ENCODE measurements at regions of chr15 and their contacts with region 1.

Region 1: DNA sequence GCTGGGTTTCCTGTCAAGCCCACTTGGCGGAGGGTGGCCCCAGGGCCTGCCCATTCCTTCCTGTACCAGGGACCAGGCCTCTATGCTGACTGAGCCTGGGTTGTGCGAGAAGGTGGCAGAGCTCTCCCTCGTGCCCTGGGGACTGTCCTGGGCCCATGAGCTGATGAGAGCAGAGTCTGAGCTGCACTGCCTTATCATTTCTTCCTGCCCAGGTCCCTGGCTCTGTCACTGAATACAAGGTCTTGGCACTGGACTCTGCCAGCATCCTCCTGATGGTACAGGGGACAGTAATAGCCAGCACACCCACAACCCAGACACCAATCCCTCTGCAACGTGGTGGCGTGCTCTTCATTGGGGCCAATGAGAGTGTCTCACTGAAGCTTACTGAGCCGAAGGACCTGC is 7.5 kb downstream of the MPI start:
- DNase-seq: no peak
- ATAC-seq: no peak

Region 2: DNA sequence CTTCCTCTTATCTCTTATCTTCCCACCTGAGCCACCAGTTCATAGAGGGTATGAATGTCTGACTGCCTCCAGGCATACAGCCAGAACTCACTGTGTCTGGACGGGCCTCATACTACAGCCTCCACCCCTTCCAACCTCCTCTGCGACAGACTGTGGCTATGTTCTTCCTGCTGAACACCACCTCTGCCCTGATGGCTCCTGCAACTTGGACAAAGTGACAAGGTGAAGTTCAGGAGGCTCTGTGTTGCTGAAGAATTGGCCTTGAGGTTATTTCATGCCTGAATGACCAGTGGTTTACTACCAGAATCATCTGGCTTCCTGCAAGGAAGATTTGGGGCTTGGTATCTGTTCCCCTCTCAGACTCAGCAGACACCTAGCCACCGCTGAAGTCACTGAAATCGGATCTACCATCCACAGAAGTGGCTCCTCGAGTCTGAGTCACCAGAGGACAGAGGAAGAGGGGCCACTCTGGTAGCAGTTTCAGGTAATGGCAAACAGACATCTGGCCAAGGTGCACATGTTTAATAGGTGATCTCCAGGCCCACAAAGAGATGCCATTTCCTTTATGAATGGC is 40.1 kb before region 1 on chr15:
- intact Hi-C with region 1: loop called in 1 of 2 experiments (anchors 5 kb)
- DNase-seq: peak; percentile 69 to 80
- ATAC-seq: peak; percentile 93